ENCODE measurements at regions of chr1 and their contacts with region 1.

Region 1: GRCh38 chr1:17551755-17552234 is 12.3 kb downstream of the ARHGEF10L start:
- DNase-seq: peak; percentile 31
- H3K4me3 ChIP-seq: no peak overlapping the region
- H3K27ac ChIP-seq: no peak overlapping the region
- H3K4me1 ChIP-seq: no peaks in the 10 kb centered on the region
- H3K27me3 ChIP-seq: no peaks in the 10 kb centered on the region
- CTCF ChIP-seq: no peak
- POLR2A ChIP-seq: no peak

Region 2: GRCh38 chr1:17540255-17541001 is 11.4 kb before region 1 on chr1:
- CTCF ChIA-PET with region 1: interaction called, 11 read pairs
- POLR2A ChIA-PET with region 1: interaction called, 3 read pairs
- dilution Hi-C with region 1: no loop called
- intact Hi-C with region 1: no loop called
- DNase-seq: no peak
- H3K4me3 ChIP-seq: peak overlapping the region; percentile 34 to 77 (median 62)
- H3K27ac ChIP-seq: peak overlapping the region; percentile 25
- H3K4me1 ChIP-seq: no peaks in the 10 kb centered on the region
- H3K27me3 ChIP-seq: peaks cover 3 to 6% of the 10 kb centered on the region in 2 experiments
- CTCF ChIP-seq: no peak
- POLR2A ChIP-seq: no peak

Region 3: GRCh38 chr1:17629460-17629859 is 77.7 kb after region 1 on chr1:
- CTCF ChIA-PET with region 1: no interaction called
- POLR2A ChIA-PET with region 1: no interaction called
- dilution Hi-C with region 1: no loop called
- intact Hi-C with region 1: no loop called
- DNase-seq: no peak
- H3K4me3 ChIP-seq: no peak overlapping the region
- H3K27ac ChIP-seq: no peak overlapping the region
- H3K4me1 ChIP-seq: no peaks in the 10 kb centered on the region
- H3K27me3 ChIP-seq: no peaks in the 10 kb centered on the region
- CTCF ChIP-seq: peak in 1 of 2 donors; percentile 17
- POLR2A ChIP-seq: no peak

Region 4: GRCh38 chr1:18239671-18240070 is 687.9 kb after region 1 on chr1:
- CTCF ChIA-PET with region 1: no interaction called
- POLR2A ChIA-PET with region 1: no interaction called
- dilution Hi-C with region 1: no loop called
- intact Hi-C with region 1: no loop called
- DNase-seq: no peak
- H3K4me3 ChIP-seq: no peak overlapping the region
- H3K27ac ChIP-seq: no peak overlapping the region
- H3K4me1 ChIP-seq: no peaks in the 10 kb centered on the region
- H3K27me3 ChIP-seq: no peaks in the 10 kb centered on the region
- CTCF ChIP-seq: no peak
- POLR2A ChIP-seq: no peak